GM13976 (cell line): ENCODE measurements at regions of chr19 and their contacts with region 1.

Region 1: GRCh38 chr19:16382775-16383543 is 58.3 kb downstream of the KLF2 start:
- DNase-seq: peak; percentile 87
- CTCF ChIP-seq: peak; percentile 53

Region 2: DNA sequence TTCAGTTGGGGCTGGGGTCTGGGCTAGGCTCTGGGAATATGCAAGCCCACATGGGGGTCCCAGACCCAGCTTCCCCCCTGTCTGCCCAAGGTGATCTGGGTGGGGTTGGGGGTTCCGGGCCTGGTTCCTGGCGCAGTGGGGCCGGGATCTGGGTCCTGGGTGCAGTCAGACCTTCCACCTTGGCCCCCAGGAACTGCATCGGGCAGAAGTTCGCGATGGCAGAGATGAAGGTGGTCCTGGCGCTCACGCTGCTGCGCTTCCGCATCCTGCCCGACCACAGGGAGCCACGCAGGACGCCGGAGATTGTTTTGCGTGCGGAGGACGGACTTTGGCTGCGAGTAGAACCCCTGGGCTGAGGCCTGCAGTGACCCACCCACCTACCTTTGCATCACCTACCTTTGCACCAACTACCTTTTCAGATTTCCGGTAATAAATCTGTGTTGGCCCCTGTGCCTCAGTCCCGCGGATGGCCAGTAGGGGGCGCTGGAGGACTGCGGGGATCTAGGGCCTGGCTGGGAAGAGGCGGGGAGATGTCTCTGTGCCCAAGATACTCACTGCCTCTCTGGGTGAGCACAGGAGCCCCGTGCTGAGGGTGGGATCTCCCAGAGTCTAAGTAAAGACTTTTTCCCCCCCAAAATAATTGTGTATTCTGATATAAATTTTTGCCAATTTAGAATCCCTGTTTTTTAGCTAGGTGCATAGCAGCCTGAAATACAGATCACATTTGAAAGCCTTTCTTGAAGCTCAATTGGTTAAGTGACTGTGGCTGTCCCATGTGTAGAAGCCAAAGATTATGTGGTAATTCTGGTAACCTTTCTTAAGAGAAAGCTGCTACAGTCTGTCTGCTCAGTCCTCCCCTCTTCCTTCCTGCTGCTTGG is 753.7 kb before region 1 on chr19:
- in situ Hi-C with region 1: loop called (anchors 25 kb)
- DNase-seq: peak; percentile 90
- CTCF ChIP-seq: peak; percentile 94

Region 3: DNA sequence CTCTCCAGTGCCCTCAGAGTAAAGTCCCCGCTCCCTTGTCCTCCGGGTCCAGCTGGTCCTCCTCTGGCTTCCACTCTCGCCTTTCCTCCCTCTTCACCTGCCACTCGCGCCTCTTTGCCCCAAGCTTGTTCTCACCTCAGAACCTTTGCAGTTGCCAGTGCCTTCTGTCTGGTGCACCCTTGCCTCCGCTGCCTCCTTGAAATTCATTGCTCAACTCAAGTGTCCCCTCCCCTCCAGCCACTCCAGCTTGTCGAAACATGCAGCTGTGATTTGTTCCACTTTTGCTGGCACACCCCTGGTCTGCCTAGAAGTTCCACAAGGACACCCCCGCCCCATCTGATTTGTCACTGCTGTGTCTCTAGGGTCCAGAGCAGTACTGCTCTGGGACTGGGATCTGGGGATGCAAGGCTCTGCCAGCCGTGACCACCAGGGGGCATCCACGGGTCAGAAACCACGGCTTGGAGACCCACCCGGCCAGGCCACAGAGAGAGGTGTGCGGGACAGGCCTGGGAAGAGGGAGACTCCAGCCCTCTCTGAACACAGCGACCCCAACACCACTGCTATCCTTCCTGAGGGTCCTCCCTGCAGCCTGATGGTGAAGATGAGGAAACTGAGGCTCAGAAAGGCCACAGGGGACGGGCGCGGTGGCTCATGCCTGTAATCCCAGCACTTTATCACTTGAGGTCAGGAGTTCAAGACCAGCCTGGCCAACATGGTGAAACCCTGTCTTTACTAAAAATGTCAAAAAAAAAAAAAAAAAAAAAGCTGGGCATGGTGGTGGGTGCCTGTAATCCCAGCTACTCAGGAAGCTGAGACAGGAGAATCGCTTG is 135.4 kb before region 1 on chr19:
- in situ Hi-C with region 1: loop called (anchors 5 kb)
- DNase-seq: peak; percentile 92
- CTCF ChIP-seq: peak; percentile 94

Region 4: DNA sequence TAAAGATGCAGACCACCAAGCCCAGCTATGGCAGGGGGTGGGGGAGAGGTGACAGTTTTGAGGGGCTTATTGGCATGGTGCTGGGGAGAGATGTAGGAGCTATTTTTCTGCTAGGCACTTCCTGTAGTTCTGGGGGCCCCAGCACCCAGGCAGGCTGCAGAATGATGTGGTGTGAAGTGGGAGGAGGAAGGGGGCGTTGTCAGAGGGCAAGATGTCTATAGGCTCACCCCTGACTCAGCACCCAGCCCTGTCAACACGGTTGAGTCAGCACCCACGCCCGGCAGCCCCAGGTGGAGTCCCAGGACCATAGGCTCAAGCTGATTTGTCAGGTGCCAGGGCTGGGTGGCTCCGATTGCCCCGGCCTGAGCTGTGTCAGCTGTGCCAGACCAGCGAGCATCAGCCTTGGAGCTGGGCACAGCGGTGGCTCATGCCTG is 52.6 kb before region 1 on chr19:
- in situ Hi-C with region 1: no loop called
- DNase-seq: peak; percentile 71
- CTCF ChIP-seq: no peak

Region 5: DNA sequence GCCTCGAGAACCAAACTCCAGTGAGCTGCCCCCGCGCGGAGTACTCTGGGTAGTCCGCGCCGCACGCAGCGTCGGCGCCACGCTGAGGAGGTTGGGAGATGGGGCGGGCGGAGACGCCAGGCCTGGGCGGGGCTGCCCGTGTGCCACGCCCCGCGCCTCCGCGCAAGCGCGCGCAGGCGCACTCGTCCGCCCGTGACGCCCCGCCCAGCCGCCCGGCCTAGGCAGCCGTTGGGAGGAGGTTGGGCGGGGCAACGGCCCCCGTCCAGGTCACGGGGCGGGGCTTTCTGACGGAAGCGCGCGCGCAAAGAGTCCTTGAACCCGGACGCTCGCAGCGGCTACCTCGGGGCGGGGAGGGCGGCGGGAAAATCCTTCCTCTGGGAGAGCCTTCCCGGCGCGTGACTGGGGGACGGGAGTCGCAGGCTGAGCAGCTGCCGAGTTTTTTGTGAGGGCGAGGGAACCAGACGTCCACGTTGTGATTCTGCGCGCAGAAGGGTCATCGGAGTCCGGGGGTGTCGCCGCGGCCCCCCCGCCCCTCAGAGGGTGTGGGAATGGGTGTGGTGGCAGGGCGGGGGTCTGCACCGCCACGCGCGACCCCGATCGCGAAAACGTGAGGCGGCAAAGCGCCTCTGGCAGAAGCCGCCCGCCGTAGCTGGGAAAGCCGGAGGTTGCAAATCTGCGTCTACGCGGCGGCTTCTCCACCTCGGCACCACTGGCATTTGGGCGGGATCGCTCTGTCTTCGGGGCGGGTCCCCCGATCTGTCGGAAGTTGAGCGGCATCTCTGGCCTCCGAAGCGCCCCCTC is 245.4 kb after region 1 on chr19 and contains the start of gene MED26:
- in situ Hi-C with region 1: no loop called
- DNase-seq: peak; percentile 99
- CTCF ChIP-seq: no peak